Naive thymus-derived CD4-positive, alpha-beta T cell (primary cell): ENCODE measurements at regions of chr11 and their contacts with region 1.

Region 1: GRCh38 chr11:47932544-47932943 is 47.8 kb upstream of the PTPRJ start:
- DNase-seq: no peak
- ATAC-seq: no peak
- H3K4me3 ChIP-seq: no peak overlapping the region
- H3K4me3 Mint-ChIP-seq: no peak overlapping the region
- H3K27ac ChIP-seq: no peak overlapping the region
- H3K27ac Mint-ChIP-seq: peak overlapping the region in 1 of 9 donors; percentile 41
- H3K4me1 ChIP-seq: peaks cover 7 to 13% of the 10 kb centered on the region in 2 donors
- H3K4me1 Mint-ChIP-seq: peaks cover 0 to 28% (median 17%) of the 10 kb centered on the region in 7 donors
- H3K27me3 ChIP-seq: no peaks in the 10 kb centered on the region
- H3K27me3 Mint-ChIP-seq: peaks cover 0 to 2% (median 0%) of the 10 kb centered on the region in 5 donors

Region 2: DNA sequence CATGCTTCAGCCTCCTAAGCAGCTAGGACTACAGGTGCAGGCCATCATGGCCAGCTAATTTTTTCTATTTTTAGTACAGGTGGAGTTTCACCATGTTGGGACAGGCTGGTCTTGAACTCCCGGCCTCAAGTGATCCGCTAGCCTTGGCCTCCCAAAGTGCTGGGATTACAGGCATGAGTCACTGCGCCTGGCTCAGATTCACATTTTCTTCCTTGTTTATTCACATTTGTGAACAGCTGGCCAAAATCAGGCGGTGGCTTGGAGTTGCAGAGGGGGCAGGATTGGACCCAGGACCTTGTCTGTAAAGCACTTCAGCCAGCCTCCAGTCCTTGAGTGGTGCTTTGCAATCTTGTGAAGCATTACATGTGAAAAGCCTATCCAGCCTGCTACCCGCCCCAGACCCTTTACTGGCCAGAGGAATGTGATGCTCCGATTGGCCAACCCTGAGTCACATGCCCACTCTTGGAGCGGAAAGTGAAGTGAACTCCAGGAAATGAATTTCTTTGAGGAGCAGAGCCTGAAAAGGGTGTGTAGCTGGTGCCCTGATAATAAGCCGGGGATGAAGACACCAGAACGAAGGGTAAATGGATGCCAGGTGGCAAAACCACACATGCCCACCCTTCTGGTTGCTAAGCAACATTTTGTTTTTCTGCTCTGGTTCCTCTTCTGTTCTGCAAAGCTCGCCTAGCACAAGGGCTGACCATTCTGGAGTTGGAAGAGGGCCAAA is 14.7 kb before region 1 on chr11:
- CTCF ChIA-PET with region 1: interaction called, 13 read pairs
- POLR2A ChIA-PET with region 1: interaction called, 4 read pairs
- intact Hi-C with region 1: no loop called
- DNase-seq: no peak
- ATAC-seq: peak; percentile 71
- H3K4me3 ChIP-seq: no peak overlapping the region
- H3K4me3 Mint-ChIP-seq: peak overlapping the region in 1 of 10 donors; percentile 24
- H3K27ac ChIP-seq: no peak overlapping the region
- H3K27ac Mint-ChIP-seq: peak overlapping the region; percentile 4 to 86 (median 60)
- H3K4me1 ChIP-seq: peaks cover 39 to 42% of the 10 kb centered on the region in 2 donors
- H3K4me1 Mint-ChIP-seq: peaks cover 27 to 77% (median 65%) of the 10 kb centered on the region in 7 donors
- H3K27me3 ChIP-seq: no peaks in the 10 kb centered on the region
- H3K27me3 Mint-ChIP-seq: no peaks in the 10 kb centered on the region

Region 3: GRCh38 chr11:47980245-47981049 is 47.9 kb after region 1 on chr11 and contains the start of gene PTPRJ:
- CTCF ChIA-PET with region 1: interaction called, 7 read pairs
- POLR2A ChIA-PET with region 1: interaction called, 3 read pairs
- intact Hi-C with region 1: loop called (anchors 1 to 2 kb)
- DNase-seq: peak; percentile 46 to 75 (median 66)
- ATAC-seq: peak; percentile 85
- H3K4me3 ChIP-seq: peak within 1 kb of the TSS; percentile 67
- H3K4me3 Mint-ChIP-seq: peak within 1 kb of the TSS; percentile 77 to 95 (median 90)
- H3K27ac ChIP-seq: peak within 1 kb of the TSS; percentile 79
- H3K27ac Mint-ChIP-seq: peak within 1 kb of the TSS; percentile 12 to 86 (median 64)
- H3K4me1 ChIP-seq: peaks cover 25% of the 10 kb centered on the region in 2 donors
- H3K4me1 Mint-ChIP-seq: peaks cover 29 to 37% (median 35%) of the 10 kb centered on the region in 7 donors
- H3K27me3 ChIP-seq: no peaks in the 10 kb centered on the region
- H3K27me3 Mint-ChIP-seq: peaks cover 0 to 19% (median 0%) of the 10 kb centered on the region in 5 donors
- total RNA-seq, gene PTPRJ: 31.8 to 82.3 (median 53.9) TPM

Region 4: DNA sequence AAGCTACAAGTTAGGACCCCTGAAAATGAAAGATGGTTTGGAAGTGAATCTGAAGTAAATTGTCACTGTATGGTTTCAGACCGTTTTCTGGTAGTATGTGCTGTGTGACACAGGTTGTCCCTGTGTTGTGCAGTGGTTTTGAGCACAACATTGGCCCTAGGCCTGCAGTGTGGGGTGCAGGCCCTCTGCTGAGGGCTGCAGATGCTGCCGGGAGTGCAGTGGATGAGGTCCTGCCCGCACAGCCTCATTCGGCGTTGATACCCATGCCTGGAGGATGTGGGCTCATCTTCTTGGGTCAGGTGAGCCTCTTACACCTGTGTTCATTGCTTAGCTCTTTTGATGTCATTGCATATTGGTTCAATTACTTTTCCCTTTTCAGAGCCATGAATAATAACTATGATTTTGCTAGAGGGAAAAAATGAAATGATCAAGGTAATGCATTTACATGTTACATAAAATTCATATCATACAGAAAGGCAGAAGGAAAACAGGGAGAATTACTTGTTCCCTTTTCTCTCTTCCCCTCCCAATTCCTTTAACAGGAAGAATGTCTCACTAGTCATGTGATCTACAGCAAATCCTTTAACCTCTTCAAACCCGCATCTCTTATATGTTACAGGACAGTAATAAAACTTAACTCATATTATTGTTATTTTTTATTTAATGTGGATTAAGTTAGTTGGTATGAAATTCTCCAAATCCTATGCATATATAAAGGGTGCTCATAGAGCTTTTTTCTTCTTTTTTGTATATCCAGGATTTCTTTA is 96.6 kb after region 1 on chr11:
- CTCF ChIA-PET with region 1: interaction called, 8 read pairs
- POLR2A ChIA-PET with region 1: no interaction called
- intact Hi-C with region 1: loop called in 1 of 2 experiments (anchors 5 kb)
- DNase-seq: peak in 6 of 9 donors; percentile 34 to 57 (median 46)
- ATAC-seq: peak; percentile 61
- H3K4me3 ChIP-seq: peak overlapping the region; percentile 3
- H3K4me3 Mint-ChIP-seq: peak overlapping the region in 9 of 10 donors; percentile 5 to 71 (median 63)
- H3K27ac ChIP-seq: peak overlapping the region; percentile 55
- H3K27ac Mint-ChIP-seq: peak overlapping the region; percentile 82 to 95 (median 90)
- H3K4me1 ChIP-seq: peaks cover 17 to 33% of the 10 kb centered on the region in 2 donors
- H3K4me1 Mint-ChIP-seq: peaks cover 40 to 80% (median 61%) of the 10 kb centered on the region in 7 donors
- H3K27me3 ChIP-seq: no peaks in the 10 kb centered on the region
- H3K27me3 Mint-ChIP-seq: no peaks in the 10 kb centered on the region

Region 5: GRCh38 chr11:48109046-48109666 is 176.6 kb after region 1 on chr11:
- CTCF ChIA-PET with region 1: interaction called, 184 read pairs
- POLR2A ChIA-PET with region 1: interaction called, 23 read pairs
- intact Hi-C with region 1: loop called (anchors 1 kb)
- DNase-seq: peak in 6 of 9 donors; percentile 20 to 50 (median 32)
- ATAC-seq: peak; percentile 57
- H3K4me3 ChIP-seq: peak overlapping the region; percentile 26
- H3K4me3 Mint-ChIP-seq: peak overlapping the region; percentile 38 to 86 (median 76)
- H3K27ac ChIP-seq: peak overlapping the region; percentile 30
- H3K27ac Mint-ChIP-seq: peak overlapping the region in 8 of 9 donors; percentile 14 to 90 (median 80)
- H3K4me1 ChIP-seq: peaks cover 18 to 27% of the 10 kb centered on the region in 2 donors
- H3K4me1 Mint-ChIP-seq: peaks cover 32 to 59% (median 49%) of the 10 kb centered on the region in 7 donors
- H3K27me3 ChIP-seq: no peaks in the 10 kb centered on the region
- H3K27me3 Mint-ChIP-seq: no peaks in the 10 kb centered on the region

Region 6: GRCh38 chr11:48307760-48308386 is 375.3 kb after region 1 on chr11:
- CTCF ChIA-PET with region 1: no interaction called
- POLR2A ChIA-PET with region 1: no interaction called
- intact Hi-C with region 1: loop called in 1 of 2 experiments (anchors 10 kb)
- DNase-seq: peak in 8 of 9 donors; percentile 11 to 62 (median 52)
- ATAC-seq: peak; percentile 62
- H3K4me3 ChIP-seq: no peak overlapping the region
- H3K4me3 Mint-ChIP-seq: no peak overlapping the region
- H3K27ac ChIP-seq: no peak overlapping the region
- H3K27ac Mint-ChIP-seq: no peak overlapping the region
- H3K4me1 ChIP-seq: no peaks in the 10 kb centered on the region
- H3K4me1 Mint-ChIP-seq: peaks cover 0 to 9% (median 0%) of the 10 kb centered on the region in 7 donors
- H3K27me3 ChIP-seq: no peaks in the 10 kb centered on the region
- H3K27me3 Mint-ChIP-seq: peaks cover 2 to 22% (median 10%) of the 10 kb centered on the region in 5 donors